ENCODE measurements at regions of chr4 and their contacts with region 1.

Region 1: DNA sequence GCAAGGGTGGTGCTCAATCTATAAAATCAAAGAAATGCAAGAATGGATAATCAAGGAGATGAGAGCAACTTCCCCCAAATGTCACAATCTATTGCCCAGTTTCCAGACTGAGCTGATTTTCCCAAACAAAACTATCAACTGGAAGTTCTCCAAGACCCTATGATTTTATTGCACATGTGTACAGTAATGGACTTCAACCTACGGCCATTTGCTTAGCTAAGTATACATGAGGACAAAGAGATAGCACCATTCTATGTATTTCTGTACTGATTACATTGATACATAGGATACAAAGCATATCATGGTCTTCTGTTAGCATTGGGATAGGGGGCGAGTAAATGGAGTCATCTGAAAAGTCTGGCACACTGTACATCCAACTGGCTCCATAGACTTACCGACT is 407.8 kb downstream of the GABRG1 start:
- DNase-seq: no peak
- H3K4me3 ChIP-seq: no peak overlapping the region
- H3K27ac ChIP-seq: no peak overlapping the region
- H3K4me1 ChIP-seq: no peaks in the 10 kb centered on the region
- H3K27me3 ChIP-seq: no peaks in the 10 kb centered on the region
- CTCF ChIP-seq: no peak
- EP300 ChIP-seq: no peak
- POLR2A ChIP-seq: no peak

Region 2: DNA sequence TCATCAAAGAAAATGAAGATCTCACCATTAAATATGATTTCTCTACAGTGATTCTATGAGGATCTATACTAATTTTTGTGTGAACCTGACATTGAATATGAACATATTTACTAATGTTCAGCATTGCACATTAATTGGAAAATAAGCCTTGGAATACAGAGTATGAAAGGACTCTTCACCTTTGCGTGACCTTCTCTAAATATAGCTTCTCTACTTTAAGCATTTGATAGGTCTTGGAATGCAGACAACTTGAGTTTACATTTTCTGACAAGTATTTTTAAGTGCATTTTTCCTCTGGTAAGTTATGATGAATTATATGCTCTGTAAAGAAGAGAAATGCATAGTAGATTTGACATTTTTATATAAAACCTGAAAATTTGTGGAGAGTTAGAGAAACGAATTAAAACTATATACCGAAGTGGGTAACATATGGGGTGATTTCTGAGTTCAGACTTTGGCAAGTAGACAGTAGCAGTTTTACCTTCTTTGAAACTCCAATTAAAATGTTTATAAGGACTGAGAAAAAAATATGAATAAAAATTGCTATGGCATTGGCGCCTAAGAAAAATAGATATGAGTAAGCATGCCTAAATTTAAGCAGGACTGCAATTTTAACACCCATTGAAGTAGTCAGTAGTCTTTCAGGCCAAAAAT is 35.9 kb after region 1 on chr4:
- intact Hi-C with region 1: loop called in 1 of 4 experiments (anchors 1 kb)
- DNase-seq: no peak
- H3K4me3 ChIP-seq: no peak overlapping the region
- H3K27ac ChIP-seq: no peak overlapping the region
- H3K4me1 ChIP-seq: no peaks in the 10 kb centered on the region
- H3K27me3 ChIP-seq: no peaks in the 10 kb centered on the region
- CTCF ChIP-seq: no peak
- EP300 ChIP-seq: no peak
- POLR2A ChIP-seq: no peak